Activated CD4-positive, alpha-beta memory T cell treated with anti-CD3 and anti-CD28 coated beads, Interleukin-2, amount 10 ng/mL, durations not matched to agents 7 days and 5 days (primary cell): ENCODE measurements at regions of chr10 and their contacts with region 1.

Region 1: GRCh38 chr10:70115948-70116682 is 16.5 kb downstream of the AIFM2 start:
- DNase-seq: peak; percentile 56
- H3K4me3 Mint-ChIP-seq: no peak overlapping the region
- H3K27ac Mint-ChIP-seq: no peak overlapping the region
- H3K4me1 Mint-ChIP-seq: peaks cover 3% of the 10 kb centered on the region
- H3K27me3 Mint-ChIP-seq: no peaks in the 10 kb centered on the region

Region 2: GRCh38 chr10:70084189-70084588 is 31.9 kb before region 1 on chr10:
- CTCF ChIA-PET with region 1: interaction called, 10 read pairs
- POLR2A ChIA-PET with region 1: no interaction called
- DNase-seq: no peak
- H3K4me3 Mint-ChIP-seq: no peak overlapping the region
- H3K27ac Mint-ChIP-seq: no peak overlapping the region
- H3K4me1 Mint-ChIP-seq: no peaks in the 10 kb centered on the region
- H3K27me3 Mint-ChIP-seq: peaks cover 8% of the 10 kb centered on the region

Region 3: DNA sequence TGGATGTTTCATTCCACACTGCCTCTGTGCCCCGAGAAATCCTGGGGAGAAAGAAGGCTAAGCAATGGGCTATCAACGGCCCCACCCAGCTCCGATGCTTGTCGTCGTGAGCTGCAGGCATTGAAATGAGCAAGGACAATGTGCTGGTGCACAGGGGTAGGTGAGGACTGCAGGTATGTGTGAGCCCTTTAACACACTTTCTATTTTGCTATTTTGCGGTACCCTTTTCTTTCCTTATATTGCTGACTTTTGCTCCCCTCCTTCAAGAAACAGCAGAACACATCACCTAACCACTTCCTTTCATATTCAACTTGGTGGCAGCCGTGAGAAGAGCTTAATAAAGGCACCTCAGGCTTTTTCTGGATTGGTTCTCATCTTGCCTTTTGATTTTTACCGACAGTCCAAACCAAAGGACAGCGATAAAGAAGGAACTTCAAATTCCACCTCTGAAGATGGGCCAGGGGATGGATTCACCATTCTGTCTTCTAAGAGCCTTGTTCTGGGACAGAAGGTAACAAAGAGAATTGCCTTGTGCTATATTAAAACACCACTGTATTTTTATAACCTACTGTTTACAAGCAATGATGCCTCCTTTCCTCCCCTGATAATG is 22.7 kb before region 1 on chr10:
- CTCF ChIA-PET with region 1: interaction called, 85 read pairs
- POLR2A ChIA-PET with region 1: interaction called, 3 read pairs
- DNase-seq: peak; percentile 42
- H3K4me3 Mint-ChIP-seq: peak overlapping the region; percentile 63
- H3K27ac Mint-ChIP-seq: peak overlapping the region; percentile 81
- H3K4me1 Mint-ChIP-seq: peaks cover 31% of the 10 kb centered on the region
- H3K27me3 Mint-ChIP-seq: no peaks in the 10 kb centered on the region

Region 4: GRCh38 chr10:70132098-70133029 is 16.2 kb after region 1 on chr10 and contains the start of gene AIFM2:
- CTCF ChIA-PET with region 1: interaction called, 18 read pairs
- POLR2A ChIA-PET with region 1: no interaction called
- DNase-seq: peak; percentile 37
- H3K4me3 Mint-ChIP-seq: peak within 1 kb of the TSS; percentile 80
- H3K27ac Mint-ChIP-seq: peak within 1 kb of the TSS; percentile 62
- H3K4me1 Mint-ChIP-seq: peaks cover 25% of the 10 kb centered on the region
- H3K27me3 Mint-ChIP-seq: no peaks in the 10 kb centered on the region
- total RNA-seq, gene AIFM2: 3.7 to 3.8 TPM

Region 5: GRCh38 chr10:70212879-70213278 is 96.8 kb after region 1 on chr10:
- CTCF ChIA-PET with region 1: no interaction called
- POLR2A ChIA-PET with region 1: no interaction called
- DNase-seq: no peak
- H3K4me3 Mint-ChIP-seq: no peak overlapping the region
- H3K27ac Mint-ChIP-seq: no peak overlapping the region
- H3K4me1 Mint-ChIP-seq: no peaks in the 10 kb centered on the region
- H3K27me3 Mint-ChIP-seq: no peaks in the 10 kb centered on the region

Region 6: DNA sequence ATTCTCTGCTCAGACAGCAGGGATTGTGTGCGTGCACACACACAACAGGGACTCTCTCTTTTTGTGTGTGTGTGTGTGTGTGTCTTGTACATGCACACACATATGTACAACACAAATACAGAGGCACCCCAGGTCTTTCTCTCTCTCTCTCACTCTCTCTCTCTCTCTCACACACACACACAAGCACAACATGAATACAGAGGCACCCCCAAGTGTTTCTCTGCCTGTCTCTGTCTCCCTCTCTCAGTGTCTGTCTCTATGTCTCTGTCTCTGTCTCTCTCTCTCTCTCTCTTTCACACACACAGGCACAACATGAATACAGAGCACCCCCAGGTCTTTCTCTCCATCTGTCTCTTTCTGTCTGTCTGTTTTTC is 166.9 kb after region 1 on chr10:
- CTCF ChIA-PET with region 1: no interaction called
- POLR2A ChIA-PET with region 1: no interaction called
- DNase-seq: no peak
- H3K4me3 Mint-ChIP-seq: no peak overlapping the region
- H3K27ac Mint-ChIP-seq: no peak overlapping the region
- H3K4me1 Mint-ChIP-seq: peaks cover 1% of the 10 kb centered on the region
- H3K27me3 Mint-ChIP-seq: peaks cover 70% of the 10 kb centered on the region